AG04450 (cell line): ENCODE measurements at regions of chr1 and their contacts with region 1.

Region 1: DNA sequence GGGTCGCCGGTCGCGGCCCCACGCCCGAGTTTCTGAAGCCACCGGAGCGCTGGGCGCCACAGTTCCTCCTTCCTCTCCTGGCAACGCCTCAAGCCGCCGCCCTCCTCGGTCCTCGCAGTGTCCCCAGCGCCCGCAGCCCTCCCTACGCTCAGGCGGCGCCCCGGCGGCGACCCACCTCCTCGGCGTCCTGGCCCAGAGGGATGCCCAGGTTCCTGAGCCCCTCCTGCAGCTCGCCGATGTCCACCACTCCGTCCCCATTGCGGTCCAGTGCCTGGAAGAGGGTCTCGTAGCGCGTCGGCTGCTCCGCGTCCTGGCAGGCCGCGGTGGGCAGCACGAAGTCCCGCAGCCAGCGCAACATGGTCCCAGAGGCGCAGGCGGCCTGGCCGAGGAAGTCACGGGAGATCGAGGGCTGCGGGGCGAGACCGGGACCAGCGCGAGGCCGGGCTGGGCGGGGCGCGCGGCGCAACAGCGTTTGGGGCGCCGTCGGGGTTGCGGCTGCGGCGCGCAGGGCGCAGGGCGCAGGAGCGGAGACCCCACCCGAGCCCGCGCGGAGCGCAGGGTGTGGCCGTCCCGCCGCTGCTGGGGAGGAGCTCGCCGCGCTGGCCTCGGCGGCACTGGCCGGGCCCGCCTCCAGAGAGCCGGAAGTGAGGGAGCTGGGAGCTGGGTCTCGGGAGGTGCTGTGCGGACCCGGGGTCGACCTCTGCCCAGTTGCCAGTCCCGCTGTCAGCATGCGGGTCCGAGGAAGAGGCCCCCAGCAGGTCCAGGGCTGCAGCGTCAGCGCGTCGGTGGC is at the start of gene SLC25A24:
- DNase-seq: peak; percentile 27
- H3K4me3 ChIP-seq: peak within 1 kb of the TSS; percentile 89
- H3K27ac ChIP-seq: peak within 1 kb of the TSS; percentile 83
- H3K27me3 ChIP-seq: no peaks in the 10 kb centered on the region
- CTCF ChIP-seq: no peak
- polyA plus RNA-seq, gene SLC25A24: 35.7 and 50.5 TPM in 2 replicates

Region 2: DNA sequence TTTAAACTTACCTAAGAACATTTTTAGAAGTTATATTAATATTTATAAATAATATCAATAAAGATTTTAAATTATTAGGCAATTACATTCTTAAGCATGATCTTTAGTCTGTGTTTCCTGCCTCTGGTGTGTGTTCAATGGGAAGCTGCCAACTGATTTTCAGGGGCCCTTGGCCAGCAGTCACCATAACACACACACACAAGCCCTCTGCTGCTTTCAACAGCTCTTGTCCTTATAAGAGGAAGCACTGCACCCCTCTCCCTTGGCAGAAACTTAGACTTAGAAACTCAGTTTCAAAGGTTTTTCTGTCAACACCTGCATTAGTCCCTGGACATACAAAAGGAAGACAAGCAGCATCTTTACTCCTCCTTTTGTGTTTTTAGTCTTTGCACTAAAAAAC is 316.4 kb before region 1 on chr1:
- CTCF ChIA-PET with region 1: no interaction called
- POLR2A ChIA-PET with region 1: no interaction called
- DNase-seq: no peak
- H3K4me3 ChIP-seq: no peak overlapping the region
- H3K27ac ChIP-seq: no peak overlapping the region
- H3K27me3 ChIP-seq: no peaks in the 10 kb centered on the region
- CTCF ChIP-seq: no peak

Region 3: DNA sequence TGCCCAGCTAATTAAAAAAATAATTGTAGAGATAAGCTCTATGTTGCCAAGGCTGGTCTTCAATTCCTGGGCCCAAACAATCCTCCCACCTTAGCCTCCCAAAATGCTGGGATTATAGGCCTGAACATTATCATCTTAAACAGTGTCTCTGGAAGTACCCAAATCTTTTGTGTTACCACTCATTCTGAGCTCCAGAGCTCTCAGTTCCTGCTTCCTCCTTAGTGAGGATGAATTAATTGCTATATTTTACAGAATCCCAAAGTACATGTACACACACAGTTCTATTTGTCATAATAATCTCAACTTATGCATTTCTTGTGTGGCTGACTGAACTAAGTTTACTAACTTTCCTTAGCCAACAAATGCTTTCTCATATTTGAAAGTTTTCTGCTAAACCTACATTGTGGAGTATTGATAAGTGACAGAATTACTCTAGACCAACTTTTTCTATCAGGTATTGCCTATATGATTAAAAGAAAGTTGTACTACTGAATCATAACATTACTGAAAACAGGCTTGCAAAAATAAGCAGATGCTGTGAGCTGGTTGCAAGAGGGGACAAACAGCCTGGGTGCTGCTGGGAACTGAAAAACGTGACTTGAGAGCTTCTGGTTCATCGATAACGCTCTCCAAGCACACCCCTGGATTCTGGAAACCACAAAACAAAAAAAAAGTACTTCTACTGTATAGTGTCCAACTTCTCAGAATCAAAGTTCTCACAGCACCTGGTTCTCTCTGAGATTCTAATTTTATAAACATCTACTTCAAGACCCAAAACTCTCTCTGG is 250.3 kb before region 1 on chr1:
- CTCF ChIA-PET with region 1: no interaction called
- POLR2A ChIA-PET with region 1: no interaction called
- DNase-seq: no peak
- H3K4me3 ChIP-seq: no peak overlapping the region
- H3K27ac ChIP-seq: no peak overlapping the region
- H3K27me3 ChIP-seq: no peaks in the 10 kb centered on the region
- CTCF ChIP-seq: no peak

Region 4: GRCh38 chr1:108211014-108211671 is 11.2 kb after region 1 on chr1:
- CTCF ChIA-PET with region 1: interaction called, 10 read pairs
- POLR2A ChIA-PET with region 1: interaction called, 3 read pairs
- DNase-seq: no peak
- H3K4me3 ChIP-seq: no peak overlapping the region
- H3K27ac ChIP-seq: no peak overlapping the region
- H3K27me3 ChIP-seq: peaks cover 28% of the 10 kb centered on the region
- CTCF ChIP-seq: no peak

Region 5: GRCh38 chr1:108327534-108328462 is 127.8 kb after region 1 on chr1:
- CTCF ChIA-PET with region 1: no interaction called
- POLR2A ChIA-PET with region 1: no interaction called
- DNase-seq: no peak
- H3K4me3 ChIP-seq: no peak overlapping the region
- H3K27ac ChIP-seq: no peak overlapping the region
- H3K27me3 ChIP-seq: no peaks in the 10 kb centered on the region
- CTCF ChIP-seq: no peak